ENCODE measurements at regions of chr16 and their contacts with region 1.

Region 1: DNA sequence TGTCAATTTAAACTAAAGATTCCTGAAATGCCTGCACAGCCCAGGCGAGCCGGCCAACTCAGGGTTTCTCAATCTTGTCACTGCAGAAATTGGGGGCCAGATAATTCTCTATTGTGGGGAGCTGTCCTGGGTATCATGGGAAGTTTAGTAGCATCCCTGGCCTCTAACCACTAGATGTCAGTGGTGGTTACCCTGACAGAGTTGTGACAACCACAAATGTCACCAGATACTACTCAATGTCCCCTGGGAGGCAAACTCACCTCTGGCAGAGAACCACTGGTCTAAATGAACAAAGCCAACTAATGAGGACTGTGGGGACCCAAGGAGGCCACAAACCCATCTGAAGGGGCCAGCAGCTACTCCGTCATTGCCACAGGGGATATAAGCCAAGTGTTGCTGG is 90.9 kb downstream of the MYH11 start:
- DNase-seq: peak; percentile 74
- ATAC-seq: peak; percentile 99
- H3K4me3 ChIP-seq: no peak overlapping the region
- H3K27ac ChIP-seq: no peak overlapping the region
- H3K4me1 ChIP-seq: no peaks in the 10 kb centered on the region; the same call in 1 of the 2 replicates
- H3K27me3 ChIP-seq: no peaks in the 10 kb centered on the region
- CTCF ChIP-seq: peak; percentile 80 to 93 (median 81)
- EP300 ChIP-seq: no peak
- POLR2A ChIP-seq: no peak
- RAD21 ChIP-seq: peak; percentile 88

Region 2: DNA sequence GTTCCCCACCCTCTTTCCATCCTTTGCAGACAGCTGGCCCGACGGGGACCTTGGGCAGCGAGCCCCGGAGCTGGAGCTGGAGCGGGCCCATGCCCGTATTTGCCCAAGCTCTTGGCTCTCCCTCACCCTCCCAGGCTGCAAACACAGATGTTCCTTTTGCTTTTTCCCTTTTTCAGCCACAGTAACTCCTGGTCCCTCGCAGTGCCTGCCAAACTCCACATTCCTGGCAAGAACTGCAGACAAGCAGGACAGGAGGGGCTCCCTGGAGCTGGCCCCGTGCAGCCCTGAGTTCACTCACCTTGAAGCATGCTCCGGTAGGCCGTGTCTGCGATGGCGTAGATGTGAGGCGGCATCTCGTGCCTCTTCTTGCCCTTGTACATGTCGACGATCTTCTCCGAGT is 57.1 kb after region 1 on chr16:
- CTCF ChIA-PET with region 1: interaction called, 19 read pairs
- POLR2A ChIA-PET with region 1: interaction called, 3 read pairs
- RAD21 ChIA-PET with region 1: interaction called, 19 read pairs
- SMC1A ChIA-PET with region 1: interaction called, 14 read pairs
- in situ Hi-C with region 1: no loop called
- intact Hi-C with region 1: loop called (anchors 1 kb)
- DNase-seq: no peak
- ATAC-seq: no peak
- H3K4me3 ChIP-seq: no peak overlapping the region
- H3K27ac ChIP-seq: no peak overlapping the region
- H3K4me1 ChIP-seq: no peaks in the 10 kb centered on the region
- H3K27me3 ChIP-seq: no peaks in the 10 kb centered on the region
- CTCF ChIP-seq: no peak
- EP300 ChIP-seq: no peak
- POLR2A ChIP-seq: no peak
- RAD21 ChIP-seq: no peak

Region 3: GRCh38 chr16:16025214-16025968 is 259.5 kb after region 1 on chr16:
- CTCF ChIA-PET with region 1: no interaction called
- POLR2A ChIA-PET with region 1: no interaction called
- RAD21 ChIA-PET with region 1: no interaction called
- SMC1A ChIA-PET with region 1: no interaction called
- in situ Hi-C with region 1: no loop called
- intact Hi-C with region 1: loop called (anchors 5 kb)
- DNase-seq: no peak
- ATAC-seq: peak; percentile 86
- H3K4me3 ChIP-seq: no peak overlapping the region
- H3K27ac ChIP-seq: peak overlapping the region; percentile 57
- H3K4me1 ChIP-seq: peaks cover 17% of the 10 kb centered on the region
- H3K27me3 ChIP-seq: no peaks in the 10 kb centered on the region
- CTCF ChIP-seq: no peak
- EP300 ChIP-seq: no peak
- POLR2A ChIP-seq: 0 out of 2 replicates have a peak, but pooled peaks have one; percentile 16
- RAD21 ChIP-seq: peak; percentile 4; the same call in 1 of the 2 replicates

Region 4: GRCh38 chr16:16191493-16192167 is 425.8 kb after region 1 on chr16:
- CTCF ChIA-PET with region 1: interaction called, 3 read pairs
- POLR2A ChIA-PET with region 1: no interaction called
- RAD21 ChIA-PET with region 1: no interaction called
- SMC1A ChIA-PET with region 1: no interaction called
- in situ Hi-C with region 1: no loop called
- intact Hi-C with region 1: loop called (anchors 10 kb)
- DNase-seq: no peak
- ATAC-seq: no peak
- H3K4me3 ChIP-seq: no peak overlapping the region
- H3K27ac ChIP-seq: no peak overlapping the region
- H3K4me1 ChIP-seq: no peaks in the 10 kb centered on the region
- H3K27me3 ChIP-seq: no peaks in the 10 kb centered on the region; a peak in 1 of 4 replicates
- CTCF ChIP-seq: no peak
- EP300 ChIP-seq: no peak
- POLR2A ChIP-seq: no peak
- RAD21 ChIP-seq: no peak